Activated CD4-positive, alpha-beta T cell treated with anti-CD3 and anti-CD28 coated beads, Interleukin-2, amount 10 ng/mL, durations not matched to agents 24 days and 14 days (primary cell): ENCODE measurements at regions of chr14 and their contacts with region 1.

Region 1: DNA sequence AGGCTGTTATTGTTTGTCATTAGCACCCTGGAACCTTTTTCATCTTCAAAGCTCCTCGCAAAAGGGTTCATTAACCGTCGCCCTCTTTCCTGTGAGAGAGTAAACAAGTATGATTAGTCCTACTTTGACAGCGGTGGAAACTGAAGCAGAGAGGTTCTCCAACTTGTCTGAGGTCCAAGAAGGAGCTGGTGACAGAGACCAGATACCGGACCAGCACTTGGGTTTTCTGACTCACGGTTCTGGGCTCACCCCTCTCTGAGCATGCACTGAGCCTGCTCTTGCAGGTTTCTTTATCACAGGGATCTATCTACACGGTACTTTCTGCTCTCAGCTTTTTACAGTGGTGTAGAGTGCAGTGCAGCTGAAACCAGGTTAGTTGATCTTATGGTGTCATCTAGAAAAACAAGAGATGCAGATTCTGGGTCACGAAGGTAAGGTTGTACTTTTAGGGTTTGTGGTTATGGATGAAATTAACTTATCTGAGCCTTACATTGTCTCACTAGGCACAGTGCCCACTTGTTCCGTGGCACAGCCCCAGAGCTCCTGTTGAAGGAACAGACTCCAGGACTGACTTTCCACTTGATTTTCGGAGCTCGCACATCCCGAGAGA is 62.1 kb downstream of the PPP2R5C start:
- DNase-seq: peak; percentile 93
- H3K4me3 Mint-ChIP-seq: peak overlapping the region; percentile 81
- H3K27ac Mint-ChIP-seq: peak overlapping the region; percentile 96
- H3K4me1 Mint-ChIP-seq: peaks cover 76% of the 10 kb centered on the region
- H3K27me3 Mint-ChIP-seq: no peaks in the 10 kb centered on the region

Region 2: GRCh38 chr14:100375963-100376735 is 1447.5 kb before region 1 on chr14:
- intact Hi-C with region 1: loop called (anchors 5 kb)
- DNase-seq: peak; percentile 99
- H3K4me3 Mint-ChIP-seq: peak within 1 kb of the TSS; percentile 99
- H3K27ac Mint-ChIP-seq: peak within 1 kb of the TSS; percentile 98
- H3K4me1 Mint-ChIP-seq: peaks cover 47% of the 10 kb centered on the region
- H3K27me3 Mint-ChIP-seq: no peaks in the 10 kb centered on the region

Region 3: DNA sequence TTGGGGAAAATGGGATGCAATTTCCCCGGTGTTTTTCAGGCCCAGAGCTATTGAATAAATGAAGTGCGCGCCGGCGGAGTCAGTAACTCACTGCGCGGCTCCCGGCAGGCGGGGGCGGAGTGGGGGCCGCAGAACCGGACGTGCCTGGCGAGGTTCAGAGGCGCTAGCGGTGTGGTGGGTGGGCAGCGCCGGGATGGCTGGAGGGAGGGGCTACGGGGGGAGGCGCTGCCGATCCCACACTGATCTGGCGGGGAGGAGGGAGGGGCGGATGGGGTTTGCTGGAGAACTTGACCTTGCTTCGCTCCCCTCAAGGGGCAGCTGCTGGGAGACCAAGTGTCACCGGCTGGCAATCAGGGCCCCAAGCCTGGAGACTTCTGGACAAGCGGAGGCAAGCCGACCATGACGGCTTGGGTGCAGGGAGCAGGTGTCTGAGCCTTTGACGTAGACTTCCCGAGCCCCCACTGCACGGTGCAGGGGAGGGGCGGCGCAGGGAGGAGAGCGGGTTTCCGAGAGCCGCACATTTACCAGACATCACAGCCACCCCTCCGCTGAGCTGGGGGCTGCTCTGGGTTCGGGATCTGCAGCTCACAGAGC is 746.0 kb before region 1 on chr14:
- intact Hi-C with region 1: no loop called
- DNase-seq: no peak
- H3K4me3 Mint-ChIP-seq: no peak overlapping the region
- H3K27ac Mint-ChIP-seq: no peak overlapping the region
- H3K4me1 Mint-ChIP-seq: peaks cover 1% of the 10 kb centered on the region
- H3K27me3 Mint-ChIP-seq: peaks cover 42% of the 10 kb centered on the region

Region 4: DNA sequence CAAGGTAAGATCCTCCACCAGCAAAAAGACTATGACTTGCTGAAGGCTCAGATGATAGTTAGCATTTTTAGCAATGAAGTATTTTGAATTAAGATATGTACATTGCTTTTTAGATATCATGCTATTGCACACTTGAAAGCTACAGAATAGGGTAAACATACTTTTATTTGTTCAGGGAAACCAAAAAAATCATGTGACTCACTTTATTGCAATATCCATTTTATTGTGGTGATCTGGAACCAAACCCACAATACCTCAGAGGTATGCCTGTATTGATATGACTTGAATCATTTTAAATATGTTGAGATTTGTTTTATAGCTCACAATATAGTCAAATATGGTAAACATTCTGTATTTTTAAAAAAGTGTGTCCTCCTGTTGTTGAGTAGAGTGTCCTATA is 166.2 kb before region 1 on chr14:
- intact Hi-C with region 1: no loop called
- DNase-seq: no peak
- H3K4me3 Mint-ChIP-seq: no peak overlapping the region
- H3K27ac Mint-ChIP-seq: no peak overlapping the region
- H3K4me1 Mint-ChIP-seq: peaks cover 4% of the 10 kb centered on the region
- H3K27me3 Mint-ChIP-seq: peaks cover 65% of the 10 kb centered on the region

Region 5: GRCh38 chr14:101731187-101732080 is 92.2 kb before region 1 on chr14:
- intact Hi-C with region 1: loop called (anchors 1 kb)
- DNase-seq: peak; percentile 94
- H3K4me3 Mint-ChIP-seq: peak overlapping the region; percentile 84
- H3K27ac Mint-ChIP-seq: peak overlapping the region; percentile 98
- H3K4me1 Mint-ChIP-seq: peaks cover 56% of the 10 kb centered on the region
- H3K27me3 Mint-ChIP-seq: no peaks in the 10 kb centered on the region

Region 6: DNA sequence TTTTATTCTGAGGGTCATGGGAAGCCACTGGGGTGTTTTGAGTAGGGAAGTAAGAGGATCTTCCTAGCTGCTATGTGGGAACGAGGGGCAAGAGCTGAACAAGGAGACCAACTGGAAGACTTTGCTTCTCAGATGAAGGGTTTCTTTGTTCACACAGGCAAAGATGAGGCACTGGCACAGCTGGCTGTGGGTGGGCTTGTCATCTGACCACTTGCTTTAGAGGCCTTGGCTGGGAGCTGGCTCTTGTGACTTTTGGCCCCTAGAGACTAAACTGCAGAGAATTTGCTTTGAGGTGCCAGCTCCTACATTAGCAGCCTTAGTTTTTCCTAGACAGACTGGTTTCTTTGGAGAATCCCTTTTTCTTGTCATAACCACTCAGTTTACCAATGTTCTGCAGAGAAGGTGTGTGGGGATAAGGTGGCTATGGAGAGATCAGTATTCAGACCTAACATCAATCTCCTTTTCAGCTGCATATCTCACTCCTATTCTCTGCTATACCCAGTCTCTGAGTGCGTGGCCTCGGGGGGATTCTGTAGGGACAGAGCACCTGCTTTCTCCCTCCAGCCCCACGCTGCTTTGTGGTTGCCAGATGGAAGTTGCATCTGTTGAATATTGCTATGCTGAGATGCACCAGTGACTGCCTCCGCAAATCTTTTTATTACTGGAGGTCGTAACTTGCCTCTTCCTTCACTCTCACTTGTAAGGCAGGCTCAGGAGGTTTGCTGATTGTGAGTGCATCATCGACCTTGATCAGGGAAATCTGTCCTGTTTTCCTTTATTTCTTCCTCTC is 49.4 kb before region 1 on chr14:
- intact Hi-C with region 1: no loop called
- DNase-seq: no peak
- H3K4me3 Mint-ChIP-seq: no peak overlapping the region
- H3K27ac Mint-ChIP-seq: no peak overlapping the region
- H3K4me1 Mint-ChIP-seq: peaks cover 22% of the 10 kb centered on the region
- H3K27me3 Mint-ChIP-seq: peaks cover 2% of the 10 kb centered on the region

Region 7: GRCh38 chr14:101809671-101810514 is 13.7 kb before region 1 on chr14:
- intact Hi-C with region 1: loop called (anchors 1 kb)
- DNase-seq: peak; percentile 96
- H3K4me3 Mint-ChIP-seq: peak overlapping the region; percentile 96
- H3K27ac Mint-ChIP-seq: peak overlapping the region; percentile 99
- H3K4me1 Mint-ChIP-seq: peaks cover 43% of the 10 kb centered on the region
- H3K27me3 Mint-ChIP-seq: no peaks in the 10 kb centered on the region

Region 8: GRCh38 chr14:101876555-101876938 is 52.9 kb after region 1 on chr14:
- intact Hi-C with region 1: loop called (anchors 1 kb)
- DNase-seq: peak; percentile 88
- H3K4me3 Mint-ChIP-seq: peak overlapping the region; percentile 82
- H3K27ac Mint-ChIP-seq: peak overlapping the region; percentile 93
- H3K4me1 Mint-ChIP-seq: peaks cover 67% of the 10 kb centered on the region
- H3K27me3 Mint-ChIP-seq: no peaks in the 10 kb centered on the region

Region 9: DNA sequence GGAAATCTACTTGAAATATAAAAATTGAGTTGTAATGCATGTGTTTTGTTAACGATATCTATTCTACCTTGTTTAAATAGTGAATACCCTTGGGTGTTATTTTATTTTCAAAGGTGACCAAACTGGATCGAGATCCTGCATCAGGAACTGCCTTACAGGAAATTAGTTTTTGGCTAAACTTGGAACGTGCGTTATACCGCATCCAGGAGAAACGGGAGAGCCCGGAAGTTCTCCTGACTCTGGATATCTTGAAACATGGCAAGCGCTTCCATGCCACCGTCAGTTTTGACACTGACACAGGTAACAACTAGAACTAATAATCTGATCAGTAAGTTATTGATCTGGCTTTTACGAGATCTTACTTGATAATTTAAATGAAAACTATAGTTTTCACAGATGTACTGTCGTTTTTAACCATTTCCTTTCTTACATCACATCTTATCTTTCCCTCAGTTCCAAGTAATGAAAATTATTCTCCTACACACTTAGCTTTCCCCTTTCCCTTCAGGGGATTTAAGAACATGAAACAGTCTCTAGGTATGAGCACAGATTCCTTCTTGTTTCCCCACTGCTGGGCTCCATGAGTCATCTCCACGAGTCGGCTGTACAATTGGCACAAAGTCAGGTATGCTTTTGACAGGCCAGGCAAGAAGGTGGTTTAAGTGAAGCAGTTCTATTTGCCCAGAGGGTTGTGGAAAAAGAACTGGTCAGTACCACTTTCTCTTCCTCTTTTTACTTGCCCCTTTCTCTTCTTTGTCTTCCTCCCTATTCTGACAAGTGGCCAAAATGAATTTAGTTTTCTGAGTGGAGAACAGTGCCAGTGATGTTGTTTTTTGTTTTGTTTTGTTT is 156.9 kb after region 1 on chr14:
- intact Hi-C with region 1: no loop called
- DNase-seq: no peak
- H3K4me3 Mint-ChIP-seq: no peak overlapping the region
- H3K27ac Mint-ChIP-seq: peak overlapping the region; percentile 68
- H3K4me1 Mint-ChIP-seq: peaks cover 2% of the 10 kb centered on the region
- H3K27me3 Mint-ChIP-seq: no peaks in the 10 kb centered on the region

Region 10: GRCh38 chr14:102086972-102087761 is 263.6 kb after region 1 on chr14 and contains the start of gene HSP90AA1:
- intact Hi-C with region 1: loop called (anchors 5 kb)
- DNase-seq: peak; percentile 98
- H3K4me3 Mint-ChIP-seq: peak within 1 kb of the TSS; percentile 92
- H3K27ac Mint-ChIP-seq: peak within 1 kb of the TSS; percentile 98
- H3K4me1 Mint-ChIP-seq: peaks cover 59% of the 10 kb centered on the region
- H3K27me3 Mint-ChIP-seq: no peaks in the 10 kb centered on the region
- total RNA-seq, gene HSP90AA1: 1,216 and 1,268 TPM in 2 replicates

Region 11: DNA sequence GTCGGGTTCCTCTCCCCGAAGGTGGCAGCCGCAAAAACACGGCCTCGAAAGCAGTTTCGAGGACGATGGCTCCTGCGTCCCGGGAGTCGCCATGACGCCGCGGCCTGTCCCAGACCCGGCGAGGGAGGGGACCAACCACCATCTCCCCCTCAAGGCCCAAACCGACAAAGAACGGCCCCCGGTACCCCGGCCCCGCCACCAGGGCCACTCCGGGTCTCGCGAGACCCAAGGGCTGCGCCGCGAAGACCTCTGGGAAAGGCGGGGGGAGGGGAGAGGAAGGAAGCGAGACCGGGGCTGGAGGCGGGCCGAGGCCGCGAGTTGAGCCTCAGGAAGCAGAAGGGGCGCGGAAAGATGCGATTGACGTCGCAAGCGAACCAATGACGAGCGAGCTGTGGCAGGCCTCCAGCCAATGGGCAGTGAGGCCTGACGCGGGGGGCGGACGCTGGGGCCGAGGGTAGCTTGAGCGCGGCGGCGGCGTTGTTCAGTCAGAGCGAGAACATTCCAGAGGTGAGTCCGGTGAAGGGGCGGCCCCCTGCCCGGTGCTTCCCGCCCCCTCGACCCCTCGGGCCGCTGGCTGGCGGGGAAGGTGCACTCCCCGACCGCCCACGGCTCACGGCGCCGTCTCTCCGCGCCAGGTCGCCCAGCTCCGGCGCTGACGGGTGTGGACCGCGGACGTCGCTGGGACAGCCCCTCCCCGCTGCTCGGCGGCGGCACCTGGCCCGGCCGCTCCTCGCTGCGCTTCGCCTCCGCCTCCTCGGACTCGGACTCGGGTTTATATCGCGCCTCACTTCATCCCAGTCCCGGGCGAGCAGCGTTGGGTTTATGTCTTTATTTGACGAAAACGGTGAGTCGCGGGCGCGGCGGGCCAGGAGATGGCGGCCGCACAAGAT is 1510.4 kb after region 1 on chr14 and contains the start of gene EIF5:
- intact Hi-C with region 1: loop called (anchors 5 kb)
- DNase-seq: peak; percentile 100
- H3K4me3 Mint-ChIP-seq: peak within 1 kb of the TSS; percentile 92
- H3K27ac Mint-ChIP-seq: peak within 1 kb of the TSS; percentile 98
- H3K4me1 Mint-ChIP-seq: peaks cover 37% of the 10 kb centered on the region
- H3K27me3 Mint-ChIP-seq: peaks cover 2% of the 10 kb centered on the region
- total RNA-seq, gene EIF5: 258 and 260 TPM in 2 replicates